PC-9 (cell line): ENCODE measurements at regions of chrX and their contacts with region 1.

Region 1: GRCh38 chrX:47247206-47247998 is 14.6 kb downstream of the USP11 start:
- DNase-seq: no peak
- H3K4me3 ChIP-seq: no peak overlapping the region
- H3K27ac ChIP-seq: no peak overlapping the region
- H3K4me1 ChIP-seq: no peaks in the 10 kb centered on the region
- H3K27me3 ChIP-seq: no peaks in the 10 kb centered on the region
- CTCF ChIP-seq: no peak

Region 2: GRCh38 chrX:47206316-47206715 is 41.1 kb before region 1 on chrX:
- CTCF ChIA-PET with region 1: no interaction called
- POLR2A ChIA-PET with region 1: interaction called, 23 read pairs
- intact Hi-C with region 1: no loop called
- DNase-seq: no peak
- H3K4me3 ChIP-seq: no peak overlapping the region
- H3K27ac ChIP-seq: no peak overlapping the region
- H3K4me1 ChIP-seq: no peaks in the 10 kb centered on the region
- H3K27me3 ChIP-seq: no peaks in the 10 kb centered on the region
- CTCF ChIP-seq: no peak

Region 3: DNA sequence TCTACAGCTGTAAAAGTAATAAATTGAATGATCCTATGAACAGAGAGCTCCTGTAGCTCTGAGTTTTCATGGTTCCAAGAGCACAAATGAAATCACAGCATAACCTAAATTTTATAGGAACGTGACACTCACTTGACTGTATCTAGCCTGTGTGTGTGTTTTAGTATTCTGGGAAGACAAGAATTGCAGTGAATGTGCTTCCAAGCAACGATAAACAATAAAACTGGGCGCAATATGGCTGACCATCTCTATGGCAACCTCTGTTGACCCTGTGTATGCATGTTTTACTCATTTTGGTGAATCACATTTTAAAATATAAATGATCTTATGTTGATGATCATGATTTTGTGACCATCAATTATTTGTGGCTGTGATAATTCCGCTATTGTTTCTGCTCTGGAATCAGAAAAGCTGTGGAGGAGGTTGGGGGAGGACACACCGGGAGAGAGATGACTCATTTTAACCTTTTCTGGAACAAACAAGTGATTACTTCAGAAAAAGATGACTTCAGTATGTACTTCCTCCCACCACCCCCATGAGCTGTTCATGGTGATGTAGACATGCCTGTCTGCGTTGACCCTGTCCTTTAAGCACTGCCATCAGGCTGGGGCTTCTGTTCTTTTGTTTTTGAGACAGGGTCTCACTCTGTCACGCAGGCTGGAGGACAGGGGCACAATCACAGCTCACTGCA is 17.2 kb after region 1 on chrX:
- CTCF ChIA-PET with region 1: no interaction called
- POLR2A ChIA-PET with region 1: interaction called, 18 read pairs
- intact Hi-C with region 1: no loop called
- DNase-seq: no peak
- H3K4me3 ChIP-seq: no peak overlapping the region
- H3K27ac ChIP-seq: no peak overlapping the region
- H3K4me1 ChIP-seq: no peaks in the 10 kb centered on the region
- H3K27me3 ChIP-seq: no peaks in the 10 kb centered on the region
- CTCF ChIP-seq: no peak

Region 4: DNA sequence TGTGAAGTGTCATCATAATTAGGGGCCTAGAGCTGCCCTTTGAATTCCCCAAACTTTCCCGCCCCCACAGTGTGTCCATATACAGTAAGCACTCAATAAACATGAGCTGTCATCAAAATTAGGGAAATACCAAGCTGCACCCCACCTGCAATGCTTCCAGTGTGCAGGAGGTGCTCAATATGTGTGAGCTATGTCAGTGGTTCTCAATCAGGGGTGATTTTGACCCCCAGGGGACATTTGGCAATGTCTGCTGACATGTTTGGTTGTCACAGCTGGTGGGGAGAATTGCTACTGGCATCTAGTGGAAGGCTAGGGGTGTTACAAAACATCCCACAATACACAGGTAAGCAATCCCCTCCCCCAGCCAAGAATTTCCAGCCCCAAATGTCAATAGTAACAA is 381.6 kb after region 1 on chrX:
- CTCF ChIA-PET with region 1: no interaction called
- POLR2A ChIA-PET with region 1: interaction called, 28 read pairs
- intact Hi-C with region 1: no loop called
- DNase-seq: no peak
- H3K4me3 ChIP-seq: no peak overlapping the region
- H3K27ac ChIP-seq: no peak overlapping the region
- H3K4me1 ChIP-seq: no peaks in the 10 kb centered on the region
- H3K27me3 ChIP-seq: no peaks in the 10 kb centered on the region
- CTCF ChIP-seq: no peak; the same call in 1 of the 2 replicates